ENCODE measurements at regions of chr12 and their contacts with region 1.

Region 1: GRCh38 chr12:46303039-46303666 is 34.3 kb upstream of the SLC38A1 start:
- DNase-seq: no peak
- ATAC-seq: peak in 3 of 4 donors; percentile 59 to 68 (median 62)
- H3K4me3 ChIP-seq: no peak overlapping the region
- H3K27ac ChIP-seq: no peak overlapping the region
- H3K4me1 ChIP-seq: peaks cover 0 to 31% (median 0%) of the 10 kb centered on the region in 12 donors
- H3K27me3 ChIP-seq: no peaks in the 10 kb centered on the region
- CTCF ChIP-seq: peak; percentile 42 to 67 (median 54)
- POLR2A ChIP-seq: no peak

Region 2: GRCh38 chr12:45509187-45509586 is 794.0 kb before region 1 on chr12:
- intact Hi-C with region 1: no loop called
- DNase-seq: no peak
- ATAC-seq: no peak
- H3K4me3 ChIP-seq: no peak overlapping the region
- H3K27ac ChIP-seq: no peak overlapping the region
- H3K4me1 ChIP-seq: no peaks in the 10 kb centered on the region
- H3K27me3 ChIP-seq: no peaks in the 10 kb centered on the region
- CTCF ChIP-seq: no peak
- POLR2A ChIP-seq: no peak

Region 3: DNA sequence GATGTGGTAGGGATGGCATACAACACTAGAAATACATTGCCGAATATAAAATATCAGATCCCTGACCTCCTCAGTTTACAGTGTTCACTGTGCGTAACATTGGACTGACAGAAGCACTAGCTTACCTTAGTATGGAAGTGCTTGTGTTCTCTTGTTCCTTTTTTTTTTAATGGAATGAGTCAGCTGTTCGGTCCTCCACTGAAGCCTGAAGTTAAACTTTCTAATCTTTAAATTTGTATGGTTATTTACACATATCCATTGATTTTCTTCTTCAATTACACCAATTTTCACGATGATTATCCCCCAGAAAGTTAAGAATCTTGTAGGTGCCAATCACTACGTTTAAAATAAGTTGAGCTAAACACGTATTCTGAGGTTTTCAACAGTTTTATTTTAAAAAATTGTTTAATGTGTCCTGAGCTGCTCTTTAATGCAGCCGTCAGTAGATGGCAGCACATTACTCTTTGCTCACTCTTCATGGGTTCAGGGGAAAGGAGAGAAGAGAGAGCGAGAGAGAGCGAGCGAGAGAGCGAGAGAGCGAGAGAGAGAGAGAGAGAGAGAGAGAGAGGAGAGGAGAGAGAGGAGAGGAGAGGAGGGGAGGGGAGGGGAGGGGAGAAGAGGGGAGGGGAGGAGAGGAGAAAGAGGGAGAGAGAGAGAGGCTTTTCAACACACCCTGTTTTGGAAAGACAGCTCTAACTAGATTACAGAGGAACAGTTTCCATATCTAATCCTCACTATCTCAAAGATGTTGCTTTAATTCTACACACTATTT is 178.1 kb before region 1 on chr12:
- intact Hi-C with region 1: loop called in 3 of 10 experiments (anchors 10 kb)
- DNase-seq: peak in 3 of 5 donors; percentile 35 to 44 (median 36)
- ATAC-seq: peak; percentile 85 to 92 (median 91)
- H3K4me3 ChIP-seq: peak overlapping the region in 3 of 12 donors; percentile 22 to 38 (median 25)
- H3K27ac ChIP-seq: peak overlapping the region in 1 of 12 donors; percentile 27
- H3K4me1 ChIP-seq: peaks cover 0 to 14% (median 2%) of the 10 kb centered on the region in 12 donors
- H3K27me3 ChIP-seq: peaks cover 0 to 5% (median 0%) of the 10 kb centered on the region in 9 donors
- CTCF ChIP-seq: peak; percentile 23 to 77 (median 60)
- POLR2A ChIP-seq: no peak